Activated CD4-positive, alpha-beta T cell treated with anti-CD3 and anti-CD28 coated beads, Interleukin-2, amount 10 ng/mL, durations not matched to agents 7 days and 5 days (primary cell): ENCODE measurements at regions of chr13 and their contacts with region 1.

Region 1: GRCh38 chr13:49996951-49997895 is at the start of gene TRIM13:
- DNase-seq: peak; percentile 86
- H3K4me3 Mint-ChIP-seq: peak within 1 kb of the TSS; percentile 79
- H3K27ac Mint-ChIP-seq: peak within 1 kb of the TSS; percentile 93
- H3K4me1 Mint-ChIP-seq: peaks cover 39% of the 10 kb centered on the region
- H3K27me3 Mint-ChIP-seq: no peaks in the 10 kb centered on the region
- total RNA-seq, gene TRIM13: 17.7 to 18.5 TPM

Region 2: DNA sequence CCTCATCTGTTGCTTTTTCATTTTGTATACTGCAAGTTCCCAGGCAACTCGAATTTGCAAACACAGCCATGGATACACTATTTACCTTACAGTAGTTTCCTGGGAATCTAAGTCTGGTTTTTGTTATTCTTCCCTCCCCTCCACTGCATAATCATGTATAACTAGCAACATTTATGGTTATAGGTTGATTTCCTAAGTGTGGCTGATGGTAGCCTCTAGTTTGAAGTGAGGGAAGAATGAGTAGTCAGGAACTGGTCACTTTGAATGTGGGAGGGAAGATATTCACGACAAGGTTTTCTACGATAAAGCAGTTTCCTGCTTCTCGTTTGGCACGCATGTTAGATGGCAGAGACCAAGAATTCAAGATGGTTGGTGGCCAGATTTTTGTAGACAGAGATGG is 18.0 kb after region 1 on chr13 and contains the start of gene KCNRG:
- CTCF ChIA-PET with region 1: interaction called, 10 read pairs
- POLR2A ChIA-PET with region 1: no interaction called
- DNase-seq: no peak
- H3K4me3 Mint-ChIP-seq: no peak within 1 kb of the TSS
- H3K27ac Mint-ChIP-seq: no peak within 1 kb of the TSS
- H3K4me1 Mint-ChIP-seq: peaks cover 12% of the 10 kb centered on the region
- H3K27me3 Mint-ChIP-seq: no peaks in the 10 kb centered on the region
- total RNA-seq, gene KCNRG: 0.42 to 0.60 TPM

Region 3: DNA sequence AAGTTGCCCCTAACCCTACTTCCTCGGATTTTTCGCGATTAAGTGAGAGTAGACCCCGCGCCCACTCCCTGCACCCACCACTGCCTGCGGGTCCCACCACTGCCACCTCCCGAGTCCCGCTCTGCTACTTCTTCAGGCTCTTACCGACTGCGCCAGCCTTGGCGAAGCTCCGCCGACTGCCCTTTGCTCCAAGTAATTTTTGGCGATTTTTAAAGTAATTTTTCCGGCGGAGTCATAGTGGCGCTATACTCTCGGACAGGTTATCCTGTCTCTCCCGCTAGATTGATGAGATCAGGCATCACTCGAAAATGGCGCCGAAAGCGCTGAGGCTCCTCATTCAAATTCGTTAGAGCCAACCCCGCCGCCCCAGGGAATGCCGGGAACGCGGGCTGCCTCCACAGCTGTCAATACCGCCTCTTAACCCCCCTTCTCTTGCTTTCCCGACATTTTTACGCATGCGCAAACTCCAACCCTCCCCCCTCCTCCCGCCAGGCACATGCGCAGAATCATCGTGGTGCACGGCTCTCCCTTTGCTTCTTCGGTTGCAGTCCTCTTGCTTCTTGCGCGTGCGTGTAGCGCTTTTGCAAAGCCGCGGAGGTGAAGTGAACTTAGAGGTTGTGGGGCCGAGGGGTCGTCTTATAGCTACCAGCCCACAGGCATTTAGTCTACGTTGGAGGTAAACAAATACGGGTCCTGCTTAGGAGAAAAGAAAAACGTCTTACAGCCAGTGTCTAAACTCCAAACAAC is 84.6 kb after region 1 on chr13:
- CTCF ChIA-PET with region 1: interaction called, 16 read pairs
- POLR2A ChIA-PET with region 1: interaction called, 8 read pairs
- DNase-seq: peak; percentile 99
- H3K4me3 Mint-ChIP-seq: peak overlapping the region; percentile 99
- H3K27ac Mint-ChIP-seq: peak overlapping the region; percentile 100
- H3K4me1 Mint-ChIP-seq: peaks cover 45% of the 10 kb centered on the region
- H3K27me3 Mint-ChIP-seq: no peaks in the 10 kb centered on the region